GM10248 (cell line): ENCODE measurements at regions of chr1 and their contacts with region 1.

Region 1: GRCh38 chr1:9004700-9005394 is 21.4 kb downstream of the SLC2A7 start:
- DNase-seq: peak; percentile 91
- CTCF ChIP-seq: peak; percentile 93

Region 2: GRCh38 chr1:8910914-8911313 is 93.9 kb before region 1 on chr1:
- CTCF ChIA-PET with region 1: interaction called, 85 read pairs
- POLR2A ChIA-PET with region 1: no interaction called
- DNase-seq: no peak
- CTCF ChIP-seq: no peak

Region 3: GRCh38 chr1:8941906-8942305 is 62.9 kb before region 1 on chr1:
- CTCF ChIA-PET with region 1: interaction called, 14 read pairs
- POLR2A ChIA-PET with region 1: no interaction called
- DNase-seq: no peak
- CTCF ChIP-seq: no peak

Region 4: DNA sequence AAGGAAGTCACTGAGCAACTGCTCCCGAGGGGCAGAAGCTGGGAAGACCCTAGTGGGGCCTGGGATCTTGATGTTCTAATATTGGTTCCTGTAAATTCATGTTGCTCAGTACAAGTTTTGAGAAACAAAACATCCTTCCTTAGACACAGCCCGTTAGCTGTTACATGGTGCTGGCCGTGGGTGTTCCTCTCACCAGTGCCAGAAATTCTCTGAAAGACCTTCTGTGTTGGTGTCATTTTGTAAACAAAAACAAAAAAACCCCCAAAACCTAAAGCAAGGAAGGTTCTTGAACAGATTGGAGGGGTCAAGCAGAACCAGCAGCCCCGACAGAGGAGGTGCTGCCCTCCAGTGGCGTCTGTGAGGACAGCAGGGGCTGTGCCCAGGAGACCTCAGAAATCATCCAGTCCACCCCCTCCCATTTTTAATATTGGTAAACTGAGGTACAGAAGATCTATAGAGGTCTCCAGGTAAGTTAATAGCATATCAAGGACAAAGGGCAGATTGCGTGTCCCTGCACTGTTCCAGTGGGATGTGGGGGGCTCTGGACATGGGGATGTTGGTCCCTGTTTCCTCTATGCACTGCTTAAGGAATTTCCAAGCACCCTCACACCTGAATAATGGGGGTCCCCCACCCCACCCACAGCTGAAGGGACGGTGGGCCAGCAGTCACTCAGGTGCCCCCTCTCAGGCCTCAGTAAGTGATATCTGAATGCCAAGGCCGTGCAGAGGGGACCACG is 16.8 kb before region 1 on chr1:
- CTCF ChIA-PET with region 1: interaction called, 30 read pairs
- POLR2A ChIA-PET with region 1: no interaction called
- DNase-seq: peak; percentile 82
- CTCF ChIP-seq: peak; percentile 96

Region 5: DNA sequence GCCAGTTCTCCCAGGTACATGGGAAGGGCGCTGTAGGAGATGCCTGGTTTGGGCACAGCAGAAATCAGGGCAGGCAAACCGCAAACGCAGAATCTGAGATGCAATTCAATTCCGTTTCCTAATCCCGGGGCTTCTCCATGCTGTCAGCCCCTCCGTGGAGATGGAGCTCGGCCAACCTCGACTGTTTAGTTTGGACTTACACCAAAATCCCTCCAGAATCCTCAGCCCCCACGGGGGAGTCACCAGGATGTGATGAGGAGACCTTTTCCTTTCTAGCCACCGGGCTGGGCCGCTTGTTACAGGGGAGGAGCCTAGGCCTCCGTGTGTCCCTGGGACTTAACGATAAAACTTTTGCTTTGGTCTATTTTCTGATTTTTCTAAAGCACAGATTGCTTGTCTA is 13.5 kb after region 1 on chr1:
- CTCF ChIA-PET with region 1: interaction called, 48 read pairs
- POLR2A ChIA-PET with region 1: no interaction called
- DNase-seq: no peak
- CTCF ChIP-seq: no peak

Region 6: GRCh38 chr1:9037476-9038337 is 32.9 kb after region 1 on chr1:
- CTCF ChIA-PET with region 1: interaction called, 11 read pairs
- POLR2A ChIA-PET with region 1: no interaction called
- DNase-seq: peak; percentile 60
- CTCF ChIP-seq: no peak

Region 7: GRCh38 chr1:9110669-9111356 is 106.0 kb after region 1 on chr1:
- CTCF ChIA-PET with region 1: interaction called, 68 read pairs
- POLR2A ChIA-PET with region 1: no interaction called
- DNase-seq: peak; percentile 87
- CTCF ChIP-seq: peak; percentile 94